Heart right ventricle (tissue), 16 donors: ENCODE measurements at regions of chr5 and their contacts with region 1.

Region 1: DNA sequence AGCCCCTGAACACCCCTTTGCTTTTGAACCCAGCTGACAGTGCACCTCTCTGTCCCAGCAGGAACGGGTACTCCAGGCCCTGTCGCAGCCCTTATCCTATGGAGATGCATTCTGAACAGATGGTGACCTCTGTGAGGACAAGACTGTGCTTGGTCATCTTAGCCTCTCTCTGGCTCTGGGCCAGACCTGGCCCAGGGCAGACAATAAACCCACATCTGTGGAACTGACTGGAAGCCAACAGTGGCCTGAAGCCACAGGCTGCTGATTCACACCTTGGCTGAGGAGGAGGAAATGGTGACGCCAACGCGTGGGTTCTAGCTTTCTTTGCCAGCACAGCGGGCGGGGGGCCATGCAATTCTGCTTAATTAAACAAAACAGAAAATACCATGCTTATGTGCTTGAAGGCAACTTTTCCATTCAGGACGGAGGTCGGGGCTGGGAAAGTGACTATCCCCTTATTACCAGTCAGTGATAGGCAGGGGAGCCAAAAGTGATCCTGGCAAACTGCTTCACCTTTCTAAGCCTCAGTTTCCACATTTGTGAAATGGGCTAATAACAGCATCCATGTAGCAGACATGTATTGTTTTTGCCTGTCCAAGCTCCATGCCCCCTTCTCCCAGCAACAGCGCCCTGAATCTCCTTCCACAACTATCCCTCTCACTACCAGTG is 10.8 kb downstream of the SH3PXD2B start:
- DNase-seq: peak; percentile 80 to 87
- ATAC-seq: peak; percentile 65 to 91 (median 82)
- H3K4me3 ChIP-seq: no peak overlapping the region
- H3K27ac ChIP-seq: peak overlapping the region in 9 of 10 donors; percentile 14 to 82 (median 74)
- H3K4me1 ChIP-seq: peaks cover 19 to 69% (median 52%) of the 10 kb centered on the region in 9 donors
- H3K27me3 ChIP-seq: no peaks in the 10 kb centered on the region
- CTCF ChIP-seq: no peak

Region 2: DNA sequence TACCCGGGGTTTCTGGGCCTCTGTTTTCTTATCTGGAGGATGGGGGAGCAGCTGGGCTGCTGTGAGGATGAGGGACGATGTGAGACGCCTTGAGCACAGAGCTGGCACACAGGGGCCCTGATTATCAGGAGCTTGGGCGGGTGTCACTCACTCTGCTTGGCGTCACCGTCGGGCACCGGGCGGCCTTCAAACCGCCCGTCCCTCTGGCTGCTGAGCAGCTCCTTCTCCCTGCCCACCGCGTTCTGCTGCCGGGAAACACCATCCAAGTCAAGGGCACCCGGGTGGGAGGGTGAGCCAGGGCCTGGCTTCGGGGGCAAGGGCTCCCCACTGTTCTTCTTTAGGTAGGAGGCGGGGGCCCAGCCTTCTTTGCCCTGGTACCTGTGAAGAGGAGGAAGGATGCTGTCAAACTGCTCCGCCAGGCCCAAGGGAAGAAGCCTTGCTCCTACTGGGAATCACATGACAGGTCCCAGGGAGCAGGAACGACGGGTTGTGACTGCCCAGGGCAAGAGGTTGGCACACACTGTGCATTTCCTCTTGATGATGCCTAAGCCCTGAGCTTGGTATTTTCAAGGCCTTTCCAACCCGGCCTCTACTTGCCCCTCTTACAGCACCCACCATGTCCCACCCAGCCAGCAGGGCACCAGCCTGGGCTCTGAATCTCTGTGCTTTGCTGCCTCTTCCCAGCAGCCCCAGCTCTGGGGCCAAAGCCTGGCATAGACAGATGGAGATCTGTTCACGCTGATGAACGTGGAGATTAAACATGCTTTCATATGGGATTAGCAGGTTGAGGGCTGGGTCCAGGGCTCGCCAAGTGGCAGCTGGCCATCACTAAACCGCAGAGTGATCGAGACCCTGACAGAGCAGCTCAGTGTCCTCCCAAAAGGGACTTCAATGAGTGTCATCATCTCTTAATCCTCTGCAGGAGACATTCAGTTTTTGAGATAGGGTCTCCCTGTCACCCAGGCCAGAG is 93.1 kb before region 1 on chr5:
- intact Hi-C with region 1: loop called in 1 of 10 experiments (anchors 10 kb)
- DNase-seq: no peak
- ATAC-seq: no peak
- H3K4me3 ChIP-seq: no peak overlapping the region
- H3K27ac ChIP-seq: no peak overlapping the region
- H3K4me1 ChIP-seq: peaks cover 0 to 6% (median 0%) of the 10 kb centered on the region in 9 donors
- H3K27me3 ChIP-seq: no peaks in the 10 kb centered on the region
- CTCF ChIP-seq: no peak

Region 3: GRCh38 chr5:172541099-172541771 is 97.7 kb after region 1 on chr5:
- intact Hi-C with region 1: no loop called
- DNase-seq: peak in 1 of 2 donors; percentile 11
- ATAC-seq: peak in 7 of 8 donors; percentile 25 to 72 (median 41)
- H3K4me3 ChIP-seq: no peak overlapping the region
- H3K27ac ChIP-seq: peak overlapping the region in 1 of 10 donors; percentile 40
- H3K4me1 ChIP-seq: peaks cover 2 to 14% (median 10%) of the 10 kb centered on the region in 9 donors
- H3K27me3 ChIP-seq: no peaks in the 10 kb centered on the region
- CTCF ChIP-seq: no peak

Region 4: DNA sequence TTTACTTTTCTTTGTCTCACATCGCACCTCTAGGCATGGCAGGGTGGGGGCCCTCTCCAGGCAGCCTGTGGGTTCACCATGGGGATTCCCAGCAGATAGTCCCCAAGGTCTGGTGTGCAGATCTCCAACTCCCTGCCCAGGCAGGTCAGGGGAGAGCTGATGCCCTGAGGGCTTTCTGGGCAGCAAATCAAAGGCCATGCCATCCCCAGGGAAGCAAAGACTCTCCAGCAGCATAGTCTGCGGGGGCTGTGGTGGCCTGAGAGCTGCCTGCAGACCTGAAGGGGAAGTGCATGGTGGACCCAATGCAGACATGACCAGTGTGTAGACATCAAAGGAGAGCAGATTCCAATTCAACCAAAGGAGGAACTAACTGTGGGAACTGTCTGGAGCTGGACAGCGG is 205.2 kb after region 1 on chr5:
- intact Hi-C with region 1: no loop called
- DNase-seq: no peak
- ATAC-seq: peak in 1 of 8 donors; percentile 11
- H3K4me3 ChIP-seq: peak overlapping the region in 1 of 10 donors; percentile 10
- H3K27ac ChIP-seq: peak overlapping the region in 9 of 10 donors; percentile 13 to 99 (median 92)
- H3K4me1 ChIP-seq: peaks cover 9 to 97% (median 78%) of the 10 kb centered on the region in 9 donors
- H3K27me3 ChIP-seq: no peaks in the 10 kb centered on the region
- CTCF ChIP-seq: no peak